ENCODE measurements at regions of chr20 and their contacts with region 1.

Region 1: GRCh38 chr20:20237093-20237959 is 130.6 kb upstream of the INSM1 start:
- DNase-seq: peak; percentile 48
- ATAC-seq: peak; percentile 39
- H3K4me3 Mint-ChIP-seq: no peak overlapping the region
- H3K27ac Mint-ChIP-seq: no peak overlapping the region
- H3K4me1 Mint-ChIP-seq: no peaks in the 10 kb centered on the region
- H3K27me3 Mint-ChIP-seq: peaks cover 2% of the 10 kb centered on the region

Region 2: DNA sequence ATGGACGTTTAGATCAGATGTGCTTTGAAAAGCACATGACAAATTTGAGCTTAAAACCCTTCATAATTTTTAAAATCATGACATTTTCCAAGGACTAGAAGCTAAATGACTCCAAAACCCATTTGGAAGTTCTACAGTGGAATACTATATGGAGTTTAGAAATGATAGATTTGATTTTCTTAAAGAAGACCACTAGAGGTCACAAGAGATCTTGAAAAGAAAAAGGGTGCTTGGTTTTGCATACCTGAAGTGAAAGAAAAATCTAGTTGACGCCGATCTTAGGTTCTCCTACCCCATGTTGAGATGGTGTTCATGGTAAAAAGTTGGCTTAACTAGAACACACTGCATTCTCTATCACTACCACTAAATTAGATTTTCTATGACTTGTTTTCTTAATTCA is 153.5 kb before region 1 on chr20:
- CTCF ChIA-PET with region 1: interaction called, 5 read pairs
- POLR2A ChIA-PET with region 1: no interaction called
- intact Hi-C with region 1: loop called (anchors 1 to 2 kb)
- DNase-seq: no peak
- ATAC-seq: peak; percentile 44
- H3K4me3 Mint-ChIP-seq: no peak overlapping the region
- H3K27ac Mint-ChIP-seq: no peak overlapping the region
- H3K4me1 Mint-ChIP-seq: peaks cover 2% of the 10 kb centered on the region
- H3K27me3 Mint-ChIP-seq: peaks cover 10% of the 10 kb centered on the region

Region 3: GRCh38 chr20:20130399-20130798 is 106.9 kb before region 1 on chr20:
- CTCF ChIA-PET with region 1: no interaction called
- POLR2A ChIA-PET with region 1: no interaction called
- intact Hi-C with region 1: loop called in 1 of 2 experiments (anchors 1 kb)
- DNase-seq: no peak
- ATAC-seq: no peak
- H3K4me3 Mint-ChIP-seq: no peak overlapping the region
- H3K27ac Mint-ChIP-seq: no peak overlapping the region
- H3K4me1 Mint-ChIP-seq: no peaks in the 10 kb centered on the region
- H3K27me3 Mint-ChIP-seq: peaks cover 27% of the 10 kb centered on the region

Region 4: DNA sequence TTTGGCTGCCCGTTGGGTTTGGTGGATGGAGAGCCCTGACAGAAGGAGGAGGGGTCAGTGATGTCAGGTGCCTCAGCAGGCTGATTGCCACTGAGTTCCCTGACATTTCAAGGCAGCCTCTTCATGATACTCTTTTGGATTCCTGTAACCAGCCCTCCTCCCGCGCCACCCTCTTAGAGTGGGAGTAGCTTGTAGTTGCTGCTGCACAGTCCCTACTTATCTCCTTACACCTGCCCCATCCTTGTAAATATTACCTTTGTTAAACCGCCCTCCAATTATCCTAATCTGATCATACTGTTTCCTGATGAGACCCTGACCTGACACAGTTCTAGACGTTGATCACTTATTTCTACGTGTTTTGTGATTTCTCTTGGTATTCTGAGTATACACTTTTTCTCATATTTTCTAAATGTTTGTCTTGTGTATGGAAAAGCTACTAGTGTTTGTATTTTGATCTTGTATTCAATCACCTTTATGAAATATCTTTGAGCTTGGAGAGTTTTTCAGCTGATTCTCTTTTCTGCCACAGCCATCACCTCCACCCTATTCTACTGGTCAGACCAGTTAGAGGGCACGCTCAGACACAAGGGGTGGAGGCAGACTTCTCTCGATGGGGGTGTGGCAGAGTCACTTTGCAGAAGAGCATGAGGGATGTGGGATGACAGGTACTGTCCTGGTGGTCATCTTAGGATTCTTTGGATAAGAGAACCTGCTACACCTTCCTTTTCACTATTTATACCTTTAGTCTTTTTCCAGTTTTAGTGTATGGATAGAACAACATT is 44.7 kb before region 1 on chr20:
- CTCF ChIA-PET with region 1: no interaction called
- POLR2A ChIA-PET with region 1: no interaction called
- intact Hi-C with region 1: loop called in 1 of 2 experiments (anchors 5 kb)
- DNase-seq: no peak
- ATAC-seq: no peak
- H3K4me3 Mint-ChIP-seq: no peak overlapping the region
- H3K27ac Mint-ChIP-seq: no peak overlapping the region
- H3K4me1 Mint-ChIP-seq: no peaks in the 10 kb centered on the region
- H3K27me3 Mint-ChIP-seq: peaks cover 9% of the 10 kb centered on the region

Region 5: GRCh38 chr20:20203784-20204183 is 33.5 kb before region 1 on chr20:
- CTCF ChIA-PET with region 1: no interaction called
- POLR2A ChIA-PET with region 1: no interaction called
- intact Hi-C with region 1: no loop called
- DNase-seq: no peak
- ATAC-seq: no peak
- H3K4me3 Mint-ChIP-seq: no peak overlapping the region
- H3K27ac Mint-ChIP-seq: no peak overlapping the region
- H3K4me1 Mint-ChIP-seq: no peaks in the 10 kb centered on the region
- H3K27me3 Mint-ChIP-seq: peaks cover 8% of the 10 kb centered on the region

Region 6: DNA sequence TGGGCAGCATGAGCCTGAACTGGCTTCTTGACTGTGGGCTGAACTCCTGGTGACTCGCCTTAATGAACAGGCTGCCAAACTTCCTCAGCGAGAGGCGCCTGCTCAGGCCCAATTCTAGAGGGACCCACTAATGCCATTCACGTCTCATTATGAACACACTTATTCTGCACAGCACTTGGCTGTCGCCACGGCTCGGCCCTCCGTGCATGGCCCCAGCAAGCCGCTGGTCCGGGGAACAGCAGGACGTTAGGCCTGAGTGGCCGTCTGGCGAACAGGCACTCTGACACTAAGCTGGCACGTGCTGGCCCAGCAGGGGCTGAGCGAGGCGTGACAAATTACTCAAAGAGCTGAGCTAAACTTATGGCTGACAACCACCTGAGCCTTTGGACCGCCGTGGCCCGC is 176.5 kb after region 1 on chr20:
- CTCF ChIA-PET with region 1: no interaction called
- POLR2A ChIA-PET with region 1: no interaction called
- intact Hi-C with region 1: no loop called
- DNase-seq: no peak
- ATAC-seq: no peak
- H3K4me3 Mint-ChIP-seq: no peak overlapping the region
- H3K27ac Mint-ChIP-seq: peak overlapping the region; percentile 92
- H3K4me1 Mint-ChIP-seq: peaks cover 67% of the 10 kb centered on the region
- H3K27me3 Mint-ChIP-seq: no peaks in the 10 kb centered on the region

Region 7: GRCh38 chr20:20603339-20603990 is 366.1 kb after region 1 on chr20:
- CTCF ChIA-PET with region 1: no interaction called
- POLR2A ChIA-PET with region 1: no interaction called
- intact Hi-C with region 1: no loop called
- DNase-seq: no peak
- ATAC-seq: no peak
- H3K4me3 Mint-ChIP-seq: no peak overlapping the region
- H3K27ac Mint-ChIP-seq: no peak overlapping the region
- H3K4me1 Mint-ChIP-seq: no peaks in the 10 kb centered on the region
- H3K27me3 Mint-ChIP-seq: no peaks in the 10 kb centered on the region

Region 8: DNA sequence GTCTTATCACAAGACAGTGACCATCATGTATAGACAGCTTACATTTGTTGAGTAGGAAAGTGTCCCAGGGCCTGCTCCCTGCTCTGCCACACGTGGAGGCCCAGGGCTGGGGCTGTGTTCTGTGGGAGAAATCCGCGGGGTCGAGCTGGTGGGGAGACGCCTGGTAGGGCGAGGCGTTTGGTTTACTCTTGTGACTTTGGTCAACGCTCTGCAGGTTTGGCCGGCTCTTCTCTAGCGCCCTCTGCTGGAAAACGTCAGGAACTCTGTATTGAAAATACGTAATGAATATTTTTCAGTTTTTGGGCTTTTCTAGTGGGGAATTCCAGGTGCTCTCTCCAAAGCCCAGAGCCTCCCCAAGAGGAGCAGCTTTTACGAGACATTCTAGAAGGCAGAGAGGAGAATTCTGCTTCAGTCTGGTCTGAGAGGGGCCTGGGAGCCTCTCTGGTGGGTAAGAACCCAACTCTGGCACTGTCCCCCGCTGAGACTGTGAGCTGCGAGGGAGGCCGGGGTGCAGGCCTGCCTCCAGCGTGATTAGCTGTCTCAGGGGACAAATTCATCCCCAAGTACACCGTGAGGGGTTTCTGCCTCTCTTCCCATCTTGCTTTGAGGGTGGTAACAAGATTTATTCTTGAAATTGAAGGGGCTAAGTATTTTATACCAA is 587.7 kb after region 1 on chr20:
- CTCF ChIA-PET with region 1: no interaction called
- POLR2A ChIA-PET with region 1: no interaction called
- intact Hi-C with region 1: no loop called
- DNase-seq: peak; percentile 77
- ATAC-seq: peak; percentile 70
- H3K4me3 Mint-ChIP-seq: no peak overlapping the region
- H3K27ac Mint-ChIP-seq: no peak overlapping the region
- H3K4me1 Mint-ChIP-seq: no peaks in the 10 kb centered on the region
- H3K27me3 Mint-ChIP-seq: peaks cover 22% of the 10 kb centered on the region

Measured in activated CD4-positive, alpha-beta T cell treated with anti-CD3 and anti-CD28 coated beads for 36 hours (primary cell).